CD4-positive, alpha-beta memory T cell (primary cell): ENCODE measurements at regions of chr7 and their contacts with region 1.

Region 1: GRCh38 chr7:158829342-158830210 is at the start of gene ESYT2:
- DNase-seq: peak; percentile 98 to 100 (median 99)
- H3K4me3 ChIP-seq: peak within 1 kb of the TSS; percentile 87 to 89
- H3K4me3 Mint-ChIP-seq: peak within 1 kb of the TSS; percentile 81 to 98 (median 95)
- H3K27ac ChIP-seq: peak within 1 kb of the TSS; percentile 95
- H3K27ac Mint-ChIP-seq: peak within 1 kb of the TSS; percentile 90 to 99 (median 95)
- H3K4me1 ChIP-seq: peaks cover 41% of the 10 kb centered on the region
- H3K4me1 Mint-ChIP-seq: peaks cover 16 to 47% (median 25%) of the 10 kb centered on the region in 4 donors
- H3K27me3 ChIP-seq: no peaks in the 10 kb centered on the region
- H3K27me3 Mint-ChIP-seq: no peaks in the 10 kb centered on the region
- total RNA-seq, gene ESYT2: 114 to 116 TPM

Region 2: GRCh38 chr7:158704704-158705468 is 124.7 kb before region 1 on chr7 and contains the start of gene NCAPG2:
- CTCF ChIA-PET with region 1: interaction called, 4 read pairs
- POLR2A ChIA-PET with region 1: interaction called, 35 read pairs
- intact Hi-C with region 1: loop called (anchors 1 kb)
- DNase-seq: peak; percentile 95 to 97 (median 97)
- H3K4me3 ChIP-seq: peak within 1 kb of the TSS; percentile 81 to 88
- H3K4me3 Mint-ChIP-seq: peak within 1 kb of the TSS; percentile 78 to 94 (median 83)
- H3K27ac ChIP-seq: peak within 1 kb of the TSS; percentile 64
- H3K27ac Mint-ChIP-seq: peak within 1 kb of the TSS; percentile 74 to 87 (median 80)
- H3K4me1 ChIP-seq: peaks cover 34% of the 10 kb centered on the region
- H3K4me1 Mint-ChIP-seq: peaks cover 17 to 32% (median 25%) of the 10 kb centered on the region in 4 donors
- H3K27me3 ChIP-seq: no peaks in the 10 kb centered on the region
- H3K27me3 Mint-ChIP-seq: no peaks in the 10 kb centered on the region
- total RNA-seq, gene NCAPG2: 15.0 to 17.9 TPM

Region 3: DNA sequence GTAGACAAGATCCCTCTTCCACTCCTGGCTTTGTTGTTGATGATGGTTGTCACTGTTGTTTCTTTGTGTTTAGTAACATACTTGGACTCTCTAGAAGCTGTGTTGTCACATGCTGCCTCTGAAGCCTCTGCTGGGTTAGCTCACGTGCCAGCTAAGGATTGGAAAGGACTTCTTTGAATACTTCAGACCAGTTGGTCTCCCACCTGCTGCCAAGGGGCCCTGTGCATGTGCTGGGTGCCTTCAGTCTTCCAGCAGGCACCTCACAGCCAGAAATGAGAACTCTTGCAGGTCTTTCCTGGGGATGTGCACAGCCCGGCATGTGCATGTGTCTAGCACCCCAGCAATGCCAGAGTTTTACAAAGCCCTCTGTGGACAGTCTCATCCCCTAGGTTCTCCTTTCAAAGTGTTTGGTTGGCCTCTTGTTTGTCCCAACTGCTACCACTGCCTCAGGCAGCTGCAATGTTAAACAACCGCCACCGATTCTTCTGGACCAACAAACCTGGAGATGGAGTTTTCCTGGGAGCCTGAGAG is 103.2 kb before region 1 on chr7:
- CTCF ChIA-PET with region 1: no interaction called
- POLR2A ChIA-PET with region 1: no interaction called
- intact Hi-C with region 1: no loop called
- DNase-seq: no peak
- H3K4me3 ChIP-seq: no peak overlapping the region
- H3K4me3 Mint-ChIP-seq: no peak overlapping the region
- H3K27ac ChIP-seq: no peak overlapping the region
- H3K27ac Mint-ChIP-seq: no peak overlapping the region
- H3K4me1 ChIP-seq: no peaks in the 10 kb centered on the region
- H3K4me1 Mint-ChIP-seq: peaks cover 0 to 8% (median 3%) of the 10 kb centered on the region in 4 donors
- H3K27me3 ChIP-seq: no peaks in the 10 kb centered on the region
- H3K27me3 Mint-ChIP-seq: no peaks in the 10 kb centered on the region

Region 4: DNA sequence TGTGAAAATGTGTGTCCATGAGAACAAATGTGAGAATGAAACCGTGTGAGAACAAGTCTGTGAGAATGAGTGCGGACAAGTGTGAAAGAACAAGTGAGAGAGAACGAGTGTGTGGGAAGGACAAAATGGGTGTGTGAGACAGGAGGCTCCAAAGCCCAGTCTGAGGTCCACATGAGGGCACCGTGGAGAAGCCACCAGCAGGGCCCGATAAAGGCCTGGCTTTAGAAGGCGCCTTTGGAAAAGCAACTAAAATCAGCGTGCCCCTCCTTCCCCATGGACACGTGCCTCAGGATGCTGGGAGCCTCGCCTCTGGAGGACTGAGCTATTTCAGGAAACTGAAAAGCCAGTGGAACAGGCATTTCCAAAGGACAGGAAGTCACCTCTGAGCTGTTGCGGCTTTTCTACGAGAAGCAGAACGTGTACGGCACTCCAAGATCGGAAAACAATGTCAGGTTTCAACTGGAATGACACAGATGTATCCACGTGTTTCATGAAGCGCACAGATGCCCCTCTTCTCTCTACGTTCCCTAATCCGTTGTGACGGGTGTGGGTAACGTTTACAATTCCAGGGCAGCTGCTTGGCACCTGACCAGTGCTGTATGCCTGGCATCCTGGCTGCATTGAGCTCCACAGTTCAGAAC is 46.7 kb before region 1 on chr7:
- CTCF ChIA-PET with region 1: interaction called, 3 read pairs
- POLR2A ChIA-PET with region 1: interaction called, 16 read pairs
- intact Hi-C with region 1: loop called (anchors 1 kb)
- DNase-seq: peak in 2 of 5 donors; percentile 13 to 42
- H3K4me3 ChIP-seq: no peak overlapping the region
- H3K4me3 Mint-ChIP-seq: no peak overlapping the region
- H3K27ac ChIP-seq: no peak overlapping the region
- H3K27ac Mint-ChIP-seq: no peak overlapping the region
- H3K4me1 ChIP-seq: peaks cover 27% of the 10 kb centered on the region
- H3K4me1 Mint-ChIP-seq: peaks cover 3 to 23% (median 14%) of the 10 kb centered on the region in 4 donors
- H3K27me3 ChIP-seq: no peaks in the 10 kb centered on the region
- H3K27me3 Mint-ChIP-seq: no peaks in the 10 kb centered on the region

Region 5: DNA sequence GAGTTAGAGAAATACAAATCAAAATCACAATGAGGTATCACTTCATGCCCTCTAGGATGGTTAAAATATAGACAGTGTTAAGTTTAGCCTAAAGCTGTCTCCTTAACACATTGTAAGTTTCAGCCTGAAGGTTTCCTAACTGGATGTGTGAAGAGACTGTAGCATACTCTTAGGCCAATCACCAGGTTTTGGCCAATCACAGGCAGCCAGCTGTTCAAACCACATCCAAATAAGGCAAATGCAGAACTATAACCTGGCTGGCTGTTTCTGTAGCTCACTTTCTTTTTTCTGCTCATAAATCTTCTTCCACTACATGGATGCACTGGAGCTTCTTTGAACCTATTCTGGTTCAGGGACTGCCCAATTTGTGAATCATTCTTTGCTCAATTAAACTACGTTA is 20.0 kb before region 1 on chr7:
- CTCF ChIA-PET with region 1: interaction called, 12 read pairs
- POLR2A ChIA-PET with region 1: interaction called, 255 read pairs
- intact Hi-C with region 1: loop called (anchors 2 kb)
- DNase-seq: no peak
- H3K4me3 ChIP-seq: no peak overlapping the region
- H3K4me3 Mint-ChIP-seq: peak overlapping the region; percentile 42 to 84 (median 66)
- H3K27ac ChIP-seq: no peak overlapping the region
- H3K27ac Mint-ChIP-seq: peak overlapping the region; percentile 87 to 98 (median 94)
- H3K4me1 ChIP-seq: peaks cover 70% of the 10 kb centered on the region
- H3K4me1 Mint-ChIP-seq: peaks cover 57 to 89% (median 73%) of the 10 kb centered on the region in 4 donors
- H3K27me3 ChIP-seq: no peaks in the 10 kb centered on the region
- H3K27me3 Mint-ChIP-seq: no peaks in the 10 kb centered on the region

Region 6: GRCh38 chr7:158847451-158847866 is 17.9 kb after region 1 on chr7:
- CTCF ChIA-PET with region 1: no interaction called
- POLR2A ChIA-PET with region 1: interaction called, 22 read pairs
- intact Hi-C with region 1: loop called (anchors 2 kb)
- DNase-seq: peak in 1 of 5 donors; percentile 46
- H3K4me3 ChIP-seq: peak overlapping the region in 1 of 2 donors; percentile 51
- H3K4me3 Mint-ChIP-seq: peak overlapping the region; percentile 78 to 97 (median 86)
- H3K27ac ChIP-seq: peak overlapping the region; percentile 31
- H3K27ac Mint-ChIP-seq: peak overlapping the region; percentile 68 to 99 (median 98)
- H3K4me1 ChIP-seq: peaks cover 15% of the 10 kb centered on the region
- H3K4me1 Mint-ChIP-seq: peaks cover 19 to 39% (median 26%) of the 10 kb centered on the region in 4 donors
- H3K27me3 ChIP-seq: no peaks in the 10 kb centered on the region
- H3K27me3 Mint-ChIP-seq: no peaks in the 10 kb centered on the region

Region 7: GRCh38 chr7:158863611-158864506 is 34.3 kb after region 1 on chr7:
- CTCF ChIA-PET with region 1: interaction called, 5 read pairs
- POLR2A ChIA-PET with region 1: interaction called, 25 read pairs
- intact Hi-C with region 1: no loop called
- DNase-seq: peak; percentile 21 to 49 (median 28)
- H3K4me3 ChIP-seq: peak overlapping the region; percentile 17 to 50
- H3K4me3 Mint-ChIP-seq: peak overlapping the region; percentile 86 to 98 (median 93)
- H3K27ac ChIP-seq: peak overlapping the region; percentile 55
- H3K27ac Mint-ChIP-seq: peak overlapping the region; percentile 60 to 98 (median 95)
- H3K4me1 ChIP-seq: peaks cover 17% of the 10 kb centered on the region
- H3K4me1 Mint-ChIP-seq: peaks cover 19 to 37% (median 33%) of the 10 kb centered on the region in 4 donors
- H3K27me3 ChIP-seq: no peaks in the 10 kb centered on the region
- H3K27me3 Mint-ChIP-seq: no peaks in the 10 kb centered on the region